CD4-positive, alpha-beta memory T cell (primary cell): ENCODE measurements at regions of chr3 and their contacts with region 1.

Region 1: DNA sequence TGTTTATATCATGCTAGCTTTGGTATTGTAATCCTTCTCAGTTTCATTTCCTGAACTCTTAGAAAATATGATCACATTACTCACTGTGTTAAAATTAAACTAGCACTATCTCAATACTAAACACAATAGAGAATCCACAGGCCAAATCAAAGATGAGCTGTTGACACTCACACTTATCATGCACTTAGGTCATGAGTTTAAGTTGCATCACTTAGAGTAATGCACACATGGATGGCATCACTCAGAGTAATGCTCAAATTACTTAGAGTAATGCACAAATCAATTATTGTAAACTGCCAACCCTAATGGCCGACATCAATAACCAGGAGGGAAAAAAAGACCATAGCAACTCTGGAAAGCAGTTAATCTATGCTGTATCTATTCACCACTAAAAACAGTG is 40.0 kb upstream of the MCF2L2 start:
- DNase-seq: no peak
- H3K4me3 ChIP-seq: no peak overlapping the region
- H3K4me3 Mint-ChIP-seq: no peak overlapping the region
- H3K27ac ChIP-seq: no peak overlapping the region
- H3K27ac Mint-ChIP-seq: no peak overlapping the region
- H3K4me1 ChIP-seq: peaks cover 7% of the 10 kb centered on the region
- H3K4me1 Mint-ChIP-seq: peaks cover 2 to 6% (median 6%) of the 10 kb centered on the region in 4 donors
- H3K27me3 ChIP-seq: no peaks in the 10 kb centered on the region
- H3K27me3 Mint-ChIP-seq: no peaks in the 10 kb centered on the region

Region 2: DNA sequence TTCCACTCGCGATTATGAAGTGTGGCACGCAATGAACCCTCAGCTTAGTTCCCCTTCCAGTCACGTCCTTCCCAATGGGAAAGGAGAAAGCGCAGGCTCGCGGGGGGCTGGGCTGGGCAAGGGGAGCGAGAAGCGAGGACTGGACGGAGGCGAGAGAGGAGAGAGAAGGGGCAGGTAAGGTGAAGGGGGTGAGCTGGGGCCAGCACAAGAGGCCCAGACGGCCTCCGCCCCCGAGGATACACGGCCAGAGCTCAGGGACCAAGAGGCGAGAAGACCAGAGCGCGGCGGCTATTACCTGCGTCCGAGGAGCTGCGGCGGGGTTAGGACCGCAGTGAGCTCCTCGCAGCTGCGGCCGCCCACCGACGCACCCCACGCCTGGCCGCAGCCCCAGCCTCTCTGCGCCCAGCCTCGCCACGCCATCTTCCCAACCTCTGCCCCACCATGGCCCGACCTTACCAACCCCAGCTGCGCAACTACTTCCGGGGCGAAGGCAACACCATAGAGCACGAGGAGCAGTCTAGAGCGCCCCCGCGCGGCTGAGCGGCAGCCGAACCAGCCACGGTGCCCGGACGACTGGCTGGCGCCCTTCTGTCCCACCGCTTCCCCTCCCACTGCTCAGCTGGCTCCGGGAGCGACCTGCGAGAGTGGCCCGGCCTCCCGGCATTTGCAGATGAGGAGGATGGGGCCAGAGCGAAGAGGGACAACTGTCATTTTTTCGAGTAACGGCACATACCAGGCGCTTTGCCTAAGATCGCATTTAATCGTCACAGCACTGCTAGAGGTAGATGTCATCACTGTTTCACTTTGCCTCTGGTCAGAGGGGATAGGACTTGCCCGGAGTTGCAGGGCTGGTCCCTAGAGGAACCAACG is 416.2 kb after region 1 on chr3 and contains the start of gene PARL:
- CTCF ChIA-PET with region 1: interaction called, 3 read pairs
- POLR2A ChIA-PET with region 1: no interaction called
- intact Hi-C with region 1: loop called (anchors 1 kb)
- DNase-seq: peak; percentile 93 to 95 (median 94)
- H3K4me3 ChIP-seq: peak within 1 kb of the TSS; percentile 85 to 95
- H3K4me3 Mint-ChIP-seq: peak within 1 kb of the TSS; percentile 92 to 98 (median 95)
- H3K27ac ChIP-seq: peak within 1 kb of the TSS; percentile 74
- H3K27ac Mint-ChIP-seq: peak within 1 kb of the TSS; percentile 88 to 96 (median 93)
- H3K4me1 ChIP-seq: peaks cover 28% of the 10 kb centered on the region
- H3K4me1 Mint-ChIP-seq: peaks cover 24 to 50% (median 34%) of the 10 kb centered on the region in 4 donors
- H3K27me3 ChIP-seq: no peaks in the 10 kb centered on the region
- H3K27me3 Mint-ChIP-seq: no peaks in the 10 kb centered on the region
- total RNA-seq, gene PARL: 46.9 to 50.2 TPM